Activated naive CD4-positive, alpha-beta T cell treated with anti-CD3 and anti-CD28 coated beads for 36 hours (primary cell): ENCODE measurements at regions of chr7 and their contacts with region 1.

Region 1: GRCh38 chr7:30504347-30505173 is at the start of gene GGCT:
- DNase-seq: peak; percentile 99
- H3K4me3 Mint-ChIP-seq: peak within 1 kb of the TSS; percentile 82
- H3K27ac Mint-ChIP-seq: peak within 1 kb of the TSS; percentile 85
- H3K4me1 Mint-ChIP-seq: peaks cover 38% of the 10 kb centered on the region
- H3K27me3 Mint-ChIP-seq: no peaks in the 10 kb centered on the region
- total RNA-seq, gene GGCT: 83.0 to 83.8 TPM

Region 2: DNA sequence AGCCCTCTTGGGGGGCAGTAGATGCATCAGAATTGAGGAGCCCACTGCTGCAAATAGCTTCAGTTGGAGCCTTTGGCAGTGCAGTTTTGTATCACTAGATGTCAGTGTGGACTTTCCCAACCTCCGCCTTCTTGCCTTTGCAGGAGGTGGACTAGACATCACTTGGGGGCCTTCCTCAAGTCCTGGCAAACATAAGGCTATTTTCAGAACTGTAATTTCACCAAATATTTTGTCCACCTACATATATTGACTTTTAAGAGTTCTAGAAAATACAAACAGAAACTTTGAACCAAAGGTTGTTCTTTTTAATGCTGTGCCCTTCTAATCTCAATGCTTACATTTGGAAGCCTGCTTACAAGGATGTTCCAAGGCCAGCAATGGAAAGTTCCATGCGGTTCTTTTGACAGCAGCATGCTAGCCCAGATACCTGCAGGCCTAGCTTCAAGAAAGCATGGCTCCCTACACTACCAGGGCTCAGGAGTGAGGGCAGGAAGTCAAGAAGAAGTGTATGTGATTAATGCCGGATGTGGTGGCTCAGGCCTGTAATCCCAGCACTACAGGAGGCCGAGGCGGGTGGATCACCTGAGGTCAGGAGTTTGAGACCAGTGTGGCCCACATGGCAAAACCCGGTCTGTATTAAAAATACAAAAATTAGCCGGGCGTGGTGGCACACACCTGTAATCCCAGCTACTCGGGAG is 228.2 kb before region 1 on chr7:
- CTCF ChIA-PET with region 1: no interaction called
- intact Hi-C with region 1: loop called (anchors 2 kb)
- DNase-seq: peak; percentile 75
- H3K4me3 Mint-ChIP-seq: no peak overlapping the region
- H3K27ac Mint-ChIP-seq: no peak overlapping the region
- H3K4me1 Mint-ChIP-seq: peaks cover 5% of the 10 kb centered on the region
- H3K27me3 Mint-ChIP-seq: no peaks in the 10 kb centered on the region